ENCODE measurements at regions of chr11 and their contacts with region 1.

Region 1: GRCh38 chr11:2305140-2305840 is 3.5 kb downstream of the TSPAN32 start:
- DNase-seq: no peak
- H3K4me3 ChIP-seq: no peak overlapping the region
- H3K27me3 ChIP-seq: no peaks in the 10 kb centered on the region
- CTCF ChIP-seq: peak; percentile 97

Region 2: GRCh38 chr11:2122222-2123085 is 182.8 kb before region 1 on chr11:
- CTCF ChIA-PET with region 1: no interaction called
- POLR2A ChIA-PET with region 1: no interaction called
- DNase-seq: peak; percentile 37
- H3K4me3 ChIP-seq: no peak overlapping the region
- H3K27me3 ChIP-seq: no peaks in the 10 kb centered on the region
- CTCF ChIP-seq: no peak

Region 3: GRCh38 chr11:2168286-2169024 is 136.8 kb before region 1 on chr11:
- CTCF ChIA-PET with region 1: interaction called, 10 read pairs
- POLR2A ChIA-PET with region 1: interaction called, 16 read pairs
- DNase-seq: no peak
- H3K4me3 ChIP-seq: no peak overlapping the region
- H3K27me3 ChIP-seq: no peaks in the 10 kb centered on the region
- CTCF ChIP-seq: no peak

Region 4: GRCh38 chr11:2196970-2197770 is 108.1 kb before region 1 on chr11:
- CTCF ChIA-PET with region 1: interaction called, 36 read pairs
- POLR2A ChIA-PET with region 1: no interaction called
- DNase-seq: no peak
- H3K4me3 ChIP-seq: no peak overlapping the region
- H3K27me3 ChIP-seq: no peaks in the 10 kb centered on the region
- CTCF ChIP-seq: peak; percentile 94

Region 5: GRCh38 chr11:2328021-2328420 is 22.7 kb after region 1 on chr11:
- CTCF ChIA-PET with region 1: no interaction called
- POLR2A ChIA-PET with region 1: no interaction called
- DNase-seq: no peak
- H3K4me3 ChIP-seq: no peak overlapping the region
- H3K27me3 ChIP-seq: no peaks in the 10 kb centered on the region
- CTCF ChIP-seq: no peak

Region 6: DNA sequence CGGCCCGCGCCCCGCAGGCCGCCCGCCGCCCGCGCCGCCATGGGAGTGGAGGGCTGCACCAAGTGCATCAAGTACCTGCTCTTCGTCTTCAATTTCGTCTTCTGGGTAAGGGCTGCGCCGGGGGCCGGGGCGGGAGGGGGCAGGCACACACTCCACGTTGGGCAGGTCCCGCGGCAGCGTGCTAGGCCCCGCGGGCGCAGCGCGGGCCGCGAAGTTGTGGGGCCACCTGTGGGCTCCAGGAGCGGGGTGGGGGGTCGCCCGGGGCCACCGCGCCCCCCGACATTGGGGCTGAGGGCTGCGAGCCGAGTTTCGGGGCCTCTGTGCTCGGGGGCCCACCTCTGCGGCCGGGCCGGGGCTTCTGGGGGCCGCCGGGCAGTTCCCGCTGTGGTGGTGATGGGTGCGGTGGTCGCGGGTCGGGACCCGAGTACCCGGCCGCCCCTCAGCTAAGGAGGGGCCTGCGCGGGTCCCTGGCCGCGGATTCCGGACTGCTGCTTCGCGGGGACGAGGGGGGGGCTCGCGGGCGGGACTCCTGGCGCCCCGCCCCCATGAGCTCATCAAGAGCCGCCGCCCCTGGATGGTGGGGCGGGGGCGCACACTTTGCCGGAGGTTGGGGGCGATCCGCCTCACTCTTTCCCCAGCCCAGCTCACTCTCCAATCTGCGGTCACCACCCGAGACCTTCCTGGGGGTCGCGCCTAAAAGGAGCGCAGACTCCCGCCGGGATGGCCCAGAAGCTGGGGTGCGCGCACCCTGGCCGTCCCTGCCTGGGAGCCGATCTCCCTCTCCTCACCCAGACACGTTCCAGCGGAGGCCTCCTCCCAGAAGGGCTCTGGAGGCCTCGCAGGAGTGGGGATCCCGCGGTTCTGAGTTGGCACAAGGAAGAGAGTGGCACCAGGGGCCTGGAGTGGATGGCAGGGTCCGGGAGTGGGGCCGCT is 72.5 kb after region 1 on chr11:
- CTCF ChIA-PET with region 1: interaction called, 14 read pairs
- POLR2A ChIA-PET with region 1: interaction called, 13 read pairs
- DNase-seq: no peak
- H3K4me3 ChIP-seq: peak overlapping the region; percentile 70
- H3K27me3 ChIP-seq: no peaks in the 10 kb centered on the region
- CTCF ChIP-seq: no peak

Region 7: GRCh38 chr11:2390725-2391151 is 85.4 kb after region 1 on chr11:
- CTCF ChIA-PET with region 1: interaction called, 21 read pairs
- POLR2A ChIA-PET with region 1: interaction called, 8 read pairs
- DNase-seq: no peak
- H3K4me3 ChIP-seq: no peak overlapping the region
- H3K27me3 ChIP-seq: no peaks in the 10 kb centered on the region
- CTCF ChIP-seq: no peak

Region 8: DNA sequence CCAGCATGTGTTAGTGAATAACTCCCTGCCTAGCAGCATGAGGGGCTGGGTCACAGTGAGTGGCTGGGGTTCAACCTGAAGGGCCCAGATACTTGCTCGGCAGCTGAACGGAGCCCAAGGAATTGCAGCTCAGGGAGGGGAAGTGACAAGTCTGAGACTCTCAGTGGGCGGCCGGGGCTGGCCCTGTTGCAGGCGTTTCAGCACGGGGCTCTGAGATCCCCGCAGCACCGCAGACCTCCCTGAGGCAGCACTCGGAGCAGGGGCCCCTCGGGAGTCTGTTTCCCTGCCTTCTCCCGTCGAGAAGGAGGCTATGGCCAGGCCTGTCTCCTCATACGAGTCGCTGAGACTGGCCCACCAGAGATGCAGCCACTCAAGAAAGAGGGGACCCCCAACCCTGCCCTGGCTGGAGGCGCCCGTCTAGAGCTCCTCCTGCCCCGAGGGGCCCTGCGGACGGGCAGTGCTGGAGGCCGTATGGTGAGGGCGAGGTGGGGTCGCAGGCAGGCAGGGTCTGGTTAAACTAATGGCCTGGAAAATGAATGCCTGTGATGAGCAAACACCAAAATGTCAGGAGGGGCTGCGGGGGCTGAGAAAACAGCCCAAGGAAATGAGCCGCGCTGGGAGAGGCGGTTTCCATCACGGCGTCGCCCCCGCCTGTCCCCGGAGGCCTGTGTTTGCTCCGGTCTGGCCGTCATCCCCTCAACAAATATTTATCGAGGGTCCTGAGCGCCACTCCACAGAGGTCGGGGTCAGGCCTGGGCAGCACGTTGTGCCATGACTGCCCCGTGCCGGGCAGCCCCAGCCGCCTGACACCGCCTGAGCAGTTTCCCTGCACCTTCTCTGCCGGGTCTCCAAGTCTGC is 104.5 kb after region 1 on chr11:
- CTCF ChIA-PET with region 1: interaction called, 28 read pairs
- POLR2A ChIA-PET with region 1: no interaction called
- DNase-seq: no peak
- H3K4me3 ChIP-seq: no peak overlapping the region
- H3K27me3 ChIP-seq: peaks cover 8% of the 10 kb centered on the region
- CTCF ChIP-seq: no peak

Measured in BJ (cell line).